WTC11 (cell line): ENCODE measurements at regions of chr11 and their contacts with region 1.

Region 1: GRCh38 chr11:6285019-6285418 is 25.4 kb downstream of the CCKBR start:
- DNase-seq: no peak
- ATAC-seq: no peak
- H3K4me3 Mint-ChIP-seq: no peak overlapping the region
- H3K27ac Mint-ChIP-seq: no peak overlapping the region
- H3K4me1 Mint-ChIP-seq: peaks cover 31% of the 10 kb centered on the region
- H3K27me3 Mint-ChIP-seq: peaks cover 98% of the 10 kb centered on the region
- CTCF ChIP-seq: no peak

Region 2: GRCh38 chr11:6012035-6012668 is 272.9 kb before region 1 on chr11:
- CTCF ChIA-PET with region 1: no interaction called
- POLR2A ChIA-PET with region 1: no interaction called
- DNase-seq: no peak
- ATAC-seq: peak; percentile 44; the same call in 1 of the 2 replicates
- H3K4me3 Mint-ChIP-seq: no peak overlapping the region
- H3K27ac Mint-ChIP-seq: no peak overlapping the region
- H3K4me1 Mint-ChIP-seq: no peaks in the 10 kb centered on the region
- H3K27me3 Mint-ChIP-seq: no peaks in the 10 kb centered on the region
- CTCF ChIP-seq: no peak

Region 3: DNA sequence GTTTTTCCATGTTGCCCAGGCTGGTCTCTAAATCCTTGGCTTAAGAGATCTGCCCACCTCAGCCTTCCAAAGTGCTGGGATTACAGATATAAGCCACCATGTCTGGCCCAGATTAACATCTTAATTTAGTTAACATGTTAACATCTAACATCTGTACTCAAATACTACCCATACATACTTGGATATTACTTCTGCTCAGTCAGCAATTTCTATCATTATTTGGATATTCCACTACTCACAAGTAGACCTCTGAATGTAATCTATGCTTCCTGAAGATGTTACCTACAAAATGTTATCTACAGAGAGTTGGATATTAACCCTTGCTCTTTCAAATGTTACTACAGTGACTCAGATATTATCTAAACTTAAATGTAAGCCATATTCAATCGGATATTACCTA is 21.4 kb before region 1 on chr11:
- CTCF ChIA-PET with region 1: interaction called, 38 read pairs
- POLR2A ChIA-PET with region 1: interaction called, 3 read pairs
- DNase-seq: no peak
- ATAC-seq: no peak
- H3K4me3 Mint-ChIP-seq: no peak overlapping the region
- H3K27ac Mint-ChIP-seq: no peak overlapping the region
- H3K4me1 Mint-ChIP-seq: no peaks in the 10 kb centered on the region
- H3K27me3 Mint-ChIP-seq: peaks cover 2% of the 10 kb centered on the region
- CTCF ChIP-seq: no peak

Region 4: DNA sequence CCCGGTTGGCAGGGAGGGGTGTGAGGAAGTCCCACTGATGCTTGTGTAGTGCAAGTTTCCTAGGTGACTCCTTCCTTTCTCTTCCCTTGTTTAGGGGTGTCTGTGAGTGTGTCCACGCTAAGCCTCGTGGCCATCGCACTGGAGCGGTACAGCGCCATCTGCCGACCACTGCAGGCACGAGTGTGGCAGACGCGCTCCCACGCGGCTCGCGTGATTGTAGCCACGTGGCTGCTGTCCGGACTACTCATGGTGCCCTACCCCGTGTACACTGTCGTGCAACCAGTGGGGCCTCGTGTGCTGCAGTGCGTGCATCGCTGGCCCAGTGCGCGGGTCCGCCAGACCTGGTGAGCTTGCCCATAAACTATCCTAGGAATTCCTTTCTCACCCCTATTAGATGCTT is 15.0 kb before region 1 on chr11:
- CTCF ChIA-PET with region 1: interaction called, 18 read pairs
- POLR2A ChIA-PET with region 1: interaction called, 3 read pairs
- DNase-seq: peak; percentile 59
- ATAC-seq: peak; percentile 38
- H3K4me3 Mint-ChIP-seq: no peak overlapping the region
- H3K27ac Mint-ChIP-seq: no peak overlapping the region
- H3K4me1 Mint-ChIP-seq: peaks cover 7% of the 10 kb centered on the region; the same call in 1 of the 2 replicates
- H3K27me3 Mint-ChIP-seq: peaks cover 30% of the 10 kb centered on the region
- CTCF ChIP-seq: peak; percentile 60; the same call in 1 of the 2 replicates

Region 5: GRCh38 chr11:6298605-6299004 is 13.6 kb after region 1 on chr11:
- CTCF ChIA-PET with region 1: interaction called, 57 read pairs
- POLR2A ChIA-PET with region 1: no interaction called
- DNase-seq: peak; percentile 86
- ATAC-seq: peak; percentile 96
- H3K4me3 Mint-ChIP-seq: no peak overlapping the region
- H3K27ac Mint-ChIP-seq: peak overlapping the region; percentile 40; the same call in 1 of the 2 replicates
- H3K4me1 Mint-ChIP-seq: peaks cover 57% of the 10 kb centered on the region
- H3K27me3 Mint-ChIP-seq: no peaks in the 10 kb centered on the region
- CTCF ChIP-seq: peak; percentile 52; the same call in 1 of the 2 replicates

Region 6: GRCh38 chr11:6968816-6969215 is 683.8 kb after region 1 on chr11:
- CTCF ChIA-PET with region 1: no interaction called
- POLR2A ChIA-PET with region 1: no interaction called
- DNase-seq: no peak
- ATAC-seq: no peak
- H3K4me3 Mint-ChIP-seq: no peak overlapping the region
- H3K27ac Mint-ChIP-seq: no peak overlapping the region
- H3K4me1 Mint-ChIP-seq: no peaks in the 10 kb centered on the region
- H3K27me3 Mint-ChIP-seq: no peaks in the 10 kb centered on the region
- CTCF ChIP-seq: no peak